Caco-2 (cell line): ENCODE measurements at regions of chr13 and their contacts with region 1.

Region 1: DNA sequence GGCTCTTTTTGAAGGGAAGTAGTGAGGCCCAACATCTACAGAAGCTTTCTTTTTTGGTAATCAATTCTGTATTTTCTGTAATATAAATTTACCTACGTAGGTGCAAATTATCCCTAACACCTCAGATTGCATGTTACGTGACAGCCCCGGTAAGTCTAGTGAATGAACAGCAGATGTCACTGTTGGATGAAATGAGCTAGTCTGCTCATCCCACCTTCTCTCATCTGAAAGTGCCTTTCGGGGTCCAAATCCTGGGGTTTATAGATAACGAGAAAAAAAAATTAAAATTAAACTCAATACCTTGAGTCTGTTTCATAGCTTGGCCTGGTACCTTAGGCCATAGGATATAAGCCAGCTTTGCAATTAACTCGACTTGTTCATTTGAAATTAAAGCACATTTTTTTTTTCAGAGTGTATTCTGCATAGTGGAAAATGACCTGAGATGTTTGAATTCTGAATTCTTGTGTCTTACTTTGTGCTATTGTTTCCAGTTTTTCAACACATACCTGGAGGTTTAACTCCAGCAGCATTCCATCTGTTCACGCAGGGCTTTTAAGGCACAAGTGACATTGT is 548.2 kb downstream of the GPC5 start:
- DNase-seq: peak in 1 of 2 experiments; percentile 26
- H3K4me3 ChIP-seq: no peak overlapping the region
- H3K4me3 Mint-ChIP-seq: no peak overlapping the region
- H3K27ac Mint-ChIP-seq: no peak overlapping the region
- H3K4me1 ChIP-seq: no peaks in the 10 kb centered on the region
- H3K4me1 Mint-ChIP-seq: no peaks in the 10 kb centered on the region
- H3K27me3 ChIP-seq: no peaks in the 10 kb centered on the region
- H3K27me3 Mint-ChIP-seq: peaks cover 8% of the 10 kb centered on the region
- CTCF ChIP-seq: peak; percentile 67 to 81

Region 2: GRCh38 chr13:92143766-92144165 is 197.2 kb after region 1 on chr13:
- CTCF ChIA-PET with region 1: interaction called, 6 read pairs
- POLR2A ChIA-PET with region 1: no interaction called
- intact Hi-C with region 1: loop called (anchors 1 kb)
- DNase-seq: peak in 1 of 2 experiments; percentile 22
- H3K4me3 ChIP-seq: no peak overlapping the region
- H3K4me3 Mint-ChIP-seq: no peak overlapping the region
- H3K27ac Mint-ChIP-seq: no peak overlapping the region
- H3K4me1 ChIP-seq: no peaks in the 10 kb centered on the region
- H3K4me1 Mint-ChIP-seq: no peaks in the 10 kb centered on the region
- H3K27me3 ChIP-seq: no peaks in the 10 kb centered on the region
- H3K27me3 Mint-ChIP-seq: no peaks in the 10 kb centered on the region
- CTCF ChIP-seq: peak in 1 of 2 experiments; percentile 43

Region 3: GRCh38 chr13:92297971-92298942 is 351.7 kb after region 1 on chr13:
- CTCF ChIA-PET with region 1: no interaction called
- POLR2A ChIA-PET with region 1: no interaction called
- intact Hi-C with region 1: no loop called
- DNase-seq: no peak
- H3K4me3 ChIP-seq: no peak overlapping the region
- H3K4me3 Mint-ChIP-seq: no peak overlapping the region
- H3K27ac Mint-ChIP-seq: no peak overlapping the region
- H3K4me1 ChIP-seq: no peaks in the 10 kb centered on the region
- H3K4me1 Mint-ChIP-seq: no peaks in the 10 kb centered on the region
- H3K27me3 ChIP-seq: no peaks in the 10 kb centered on the region
- H3K27me3 Mint-ChIP-seq: no peaks in the 10 kb centered on the region
- CTCF ChIP-seq: no peak